Sciatic nerve (tissue), 2 donors: ENCODE measurements at regions of chr6 and their contacts with region 1.

Region 1: GRCh38 chr6:30489081-30490025 is at the start of gene HLA-E:
- DNase-seq: peak; percentile 95
- ATAC-seq: peak; percentile 98
- total RNA-seq, gene HLA-E: 546 TPM

Region 2: GRCh38 chr6:30453508-30454116 is 35.7 kb before region 1 on chr6:
- intact Hi-C with region 1: no loop called
- DNase-seq: peak; percentile 87
- ATAC-seq: peak; percentile 79

Region 3: DNA sequence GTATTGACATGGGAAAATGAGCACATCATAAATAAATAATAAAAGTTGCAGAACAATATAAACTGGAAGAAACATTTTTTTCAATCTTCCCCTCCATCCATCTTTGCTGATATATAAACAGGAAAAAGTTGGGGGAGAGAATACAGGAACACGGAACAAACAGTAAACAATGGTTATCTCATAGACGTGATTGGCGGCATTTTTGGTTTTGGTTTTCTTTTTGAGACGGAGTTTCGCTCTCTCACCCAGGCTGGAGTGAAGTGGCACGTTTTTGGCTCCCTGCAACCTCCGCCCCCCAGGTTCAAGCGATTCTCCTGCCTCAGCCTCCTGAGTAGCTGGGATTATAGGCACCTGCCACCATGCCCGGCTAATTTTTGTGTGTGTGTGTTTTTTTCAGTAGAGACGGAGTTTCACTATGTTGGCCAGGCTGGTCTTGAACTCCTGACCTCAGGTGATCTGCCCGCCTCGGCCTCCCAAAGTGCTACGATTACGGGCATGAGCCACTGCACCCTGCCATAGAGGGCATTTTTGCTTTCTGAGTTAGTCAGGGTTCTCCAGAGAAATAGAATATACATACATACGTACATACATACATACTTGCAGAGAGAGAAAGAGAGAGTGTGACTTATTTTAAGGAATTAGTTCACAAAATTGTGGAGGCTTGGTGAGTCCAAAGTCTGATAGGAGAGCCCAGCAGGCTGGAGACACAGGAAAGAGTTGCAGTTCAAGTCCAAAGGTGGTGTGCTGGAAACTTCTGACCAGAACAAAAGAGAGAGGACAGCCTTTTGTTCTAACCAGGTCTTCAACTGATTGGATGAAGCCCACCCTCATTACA is 44.3 kb after region 1 on chr6:
- intact Hi-C with region 1: loop called (anchors 5 kb)
- DNase-seq: no peak
- ATAC-seq: no peak

Region 4: DNA sequence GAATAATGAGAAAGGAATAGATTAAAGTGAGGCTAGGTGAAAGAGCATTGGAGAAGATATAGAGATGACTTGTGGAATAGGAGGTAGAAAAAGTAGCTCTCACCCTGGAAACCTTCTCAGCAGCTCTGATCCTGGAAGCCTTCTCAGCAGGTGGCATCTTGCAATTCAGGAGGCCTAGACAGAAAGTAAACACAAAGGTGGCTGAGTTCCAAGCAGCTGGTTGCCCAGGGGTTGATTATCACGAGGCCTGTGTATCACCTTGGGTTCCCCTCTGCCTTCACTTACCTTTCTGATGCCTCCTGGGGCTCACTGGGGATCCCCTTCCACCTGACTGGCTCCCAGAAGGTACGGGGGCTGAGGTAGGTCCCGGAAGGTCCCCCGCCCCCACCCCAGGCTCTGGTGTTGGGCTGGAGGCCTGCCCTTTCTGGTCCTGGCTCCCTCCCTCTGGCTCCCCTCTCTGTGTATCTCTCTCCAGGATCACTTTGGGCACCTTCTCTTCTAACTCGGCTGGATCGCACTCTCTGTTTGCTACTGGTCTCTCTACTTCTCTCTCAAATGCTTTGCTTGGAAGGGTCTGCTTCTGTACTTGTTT is 218.0 kb after region 1 on chr6:
- intact Hi-C with region 1: no loop called
- DNase-seq: no peak
- ATAC-seq: no peak

Region 5: GRCh38 chr6:30926644-30927043 is 437.3 kb after region 1 on chr6:
- intact Hi-C with region 1: no loop called
- DNase-seq: no peak
- ATAC-seq: peak; percentile 90